Colonic mucosa (tissue), 4 donors: ENCODE measurements at regions of chr3 and their contacts with region 1.

Region 1: GRCh38 chr3:112128843-112129727 is 4.0 kb downstream of the GCSAM start:
- DNase-seq: no peak
- H3K4me3 ChIP-seq: no peak overlapping the region
- H3K27ac ChIP-seq: no peak overlapping the region
- H3K4me1 ChIP-seq: no peaks in the 10 kb centered on the region
- H3K27me3 ChIP-seq: no peaks in the 10 kb centered on the region
- CTCF ChIP-seq: no peak

Region 2: GRCh38 chr3:112531358-112531781 is 402.3 kb after region 1 on chr3:
- intact Hi-C with region 1: loop called (anchors 5 kb)
- DNase-seq: no peak
- H3K4me3 ChIP-seq: no peak overlapping the region
- H3K27ac ChIP-seq: no peak overlapping the region
- H3K4me1 ChIP-seq: no peaks in the 10 kb centered on the region
- H3K27me3 ChIP-seq: no peaks in the 10 kb centered on the region
- CTCF ChIP-seq: peak; percentile 21